ENCODE measurements at regions of chr2 and their contacts with region 1.

Region 1: GRCh38 chr2:47767880-47768609 is 14.9 kb upstream of the MSH6 start:
- DNase-seq: no peak
- H3K4me3 ChIP-seq: peak overlapping the region; percentile 40
- H3K27ac ChIP-seq: no peak overlapping the region
- H3K27me3 ChIP-seq: peaks cover 6% of the 10 kb centered on the region
- CTCF ChIP-seq: peak; percentile 98

Region 2: GRCh38 chr2:47386551-47386950 is 381.5 kb before region 1 on chr2:
- CTCF ChIA-PET with region 1: interaction called, 40 read pairs
- POLR2A ChIA-PET with region 1: no interaction called
- DNase-seq: no peak
- H3K4me3 ChIP-seq: no peak overlapping the region
- H3K27ac ChIP-seq: no peak overlapping the region
- H3K27me3 ChIP-seq: no peaks in the 10 kb centered on the region
- CTCF ChIP-seq: no peak

Region 3: DNA sequence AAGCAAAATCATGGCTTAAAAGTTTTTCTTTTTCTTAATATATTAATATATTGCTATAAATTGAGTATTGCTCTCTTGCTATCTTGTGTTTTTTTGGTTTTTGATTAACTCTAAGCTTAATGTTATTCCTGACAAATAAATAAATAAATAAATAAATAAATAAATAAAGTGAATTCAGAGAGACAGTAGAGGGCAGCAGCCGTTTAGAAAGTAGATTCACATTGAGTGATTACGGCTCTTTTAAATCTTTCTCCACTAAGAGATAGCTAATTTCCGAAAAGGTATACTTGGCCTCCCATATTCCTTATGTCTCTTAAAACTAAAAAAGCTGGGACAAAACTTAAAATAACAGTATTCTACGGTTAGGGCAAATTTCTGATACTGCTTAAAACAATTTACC is 330.8 kb before region 1 on chr2:
- CTCF ChIA-PET with region 1: interaction called, 168 read pairs
- POLR2A ChIA-PET with region 1: no interaction called
- DNase-seq: no peak
- H3K4me3 ChIP-seq: no peak overlapping the region
- H3K27ac ChIP-seq: no peak overlapping the region
- H3K27me3 ChIP-seq: no peaks in the 10 kb centered on the region
- CTCF ChIP-seq: peak; percentile 50

Region 4: DNA sequence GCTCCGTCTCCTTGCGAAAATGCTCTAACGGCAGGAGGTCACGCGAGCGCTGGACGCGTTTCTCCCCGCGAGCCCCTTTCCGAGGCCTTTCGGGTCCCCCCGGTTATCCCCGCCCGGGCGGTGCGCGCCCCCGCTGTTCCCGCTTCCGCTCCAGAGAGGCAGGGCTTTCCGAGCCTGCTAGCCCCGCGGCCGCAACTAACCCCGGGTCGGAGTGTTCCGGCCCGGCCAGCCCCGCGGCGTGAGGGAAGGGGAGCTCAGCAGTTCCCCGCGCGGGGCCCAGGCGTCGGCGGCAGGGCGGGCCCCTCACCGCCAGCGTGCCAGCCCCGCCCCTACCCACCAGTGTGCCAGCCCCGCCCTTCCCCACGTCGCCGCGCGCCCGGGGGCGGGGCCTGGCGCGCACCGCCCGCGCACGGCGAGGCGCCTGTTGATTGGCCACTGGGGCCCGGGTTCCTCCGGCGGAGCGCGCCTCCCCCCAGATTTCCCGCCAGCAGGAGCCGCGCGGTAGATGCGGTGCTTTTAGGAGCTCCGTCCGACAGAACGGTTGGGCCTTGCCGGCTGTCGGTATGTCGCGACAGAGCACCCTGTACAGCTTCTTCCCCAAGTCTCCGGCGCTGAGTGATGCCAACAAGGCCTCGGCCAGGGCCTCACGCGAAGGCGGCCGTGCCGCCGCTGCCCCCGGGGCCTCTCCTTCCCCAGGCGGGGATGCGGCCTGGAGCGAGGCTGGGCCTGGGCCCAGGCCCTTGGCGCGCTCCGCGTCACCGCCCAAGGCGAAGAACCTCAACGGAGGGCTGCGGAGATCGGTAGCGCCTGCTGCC is 14.8 kb after region 1 on chr2 and contains the start of gene MSH6:
- CTCF ChIA-PET with region 1: interaction called, 30 read pairs
- POLR2A ChIA-PET with region 1: interaction called, 6 read pairs
- DNase-seq: peak; percentile 49
- H3K4me3 ChIP-seq: peak within 1 kb of the TSS; percentile 83
- H3K27ac ChIP-seq: peak within 1 kb of the TSS; percentile 90
- H3K27me3 ChIP-seq: no peaks in the 10 kb centered on the region
- CTCF ChIP-seq: no peak
- polyA plus RNA-seq, gene MSH6: 34.0 and 43.7 TPM in 2 replicates

Measured in AG04450 (cell line).